ENCODE measurements at regions of chr16 and their contacts with region 1.

Region 1: DNA sequence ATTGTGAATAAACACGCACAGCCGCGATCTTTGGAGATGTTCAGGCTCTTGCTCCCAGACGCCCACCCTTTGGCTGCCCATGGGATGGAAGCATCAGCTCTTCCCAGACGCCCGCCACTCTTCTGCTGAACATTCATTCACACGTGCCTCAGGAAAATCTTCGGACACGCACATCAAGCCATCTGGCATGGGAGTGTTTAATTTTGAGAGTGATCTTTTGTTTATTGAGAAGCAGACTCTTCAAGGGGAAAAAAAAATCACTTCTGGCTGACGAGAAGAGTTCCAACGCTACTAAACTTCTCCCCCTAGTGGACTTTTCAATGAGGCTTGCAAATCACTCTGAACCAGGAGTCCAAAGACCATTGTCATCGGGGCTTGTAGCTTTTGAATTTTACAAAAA is 62.0 kb upstream of the NUDT7 start:
- DNase-seq: peak; percentile 33 to 36
- ATAC-seq: peak; percentile 81 to 83; a peak in 5 of 6 replicates
- H3K4me3 ChIP-seq: no peak overlapping the region
- H3K27ac ChIP-seq: no peak overlapping the region
- H3K4me1 ChIP-seq: no peaks in the 10 kb centered on the region
- CTCF ChIP-seq: peak; percentile 65
- EP300 ChIP-seq: no peak
- POLR2A ChIP-seq: no peak
- RAD21 ChIP-seq: peak; percentile 67 to 75

Region 2: GRCh38 chr16:77599793-77600415 is 60.4 kb before region 1 on chr16:
- CTCF ChIA-PET with region 1: interaction called, 16 read pairs
- POLR2A ChIA-PET with region 1: no interaction called
- DNase-seq: peak; percentile 54 to 56
- ATAC-seq: peak; percentile 66 to 84; a peak in 3 of 6 replicates
- H3K4me3 ChIP-seq: no peak overlapping the region
- H3K27ac ChIP-seq: no peak overlapping the region
- H3K4me1 ChIP-seq: no peaks in the 10 kb centered on the region
- CTCF ChIP-seq: peak; percentile 67
- EP300 ChIP-seq: no peak
- POLR2A ChIP-seq: no peak
- RAD21 ChIP-seq: peak; percentile 49 to 65; a peak in 4 of 5 replicates

Region 3: DNA sequence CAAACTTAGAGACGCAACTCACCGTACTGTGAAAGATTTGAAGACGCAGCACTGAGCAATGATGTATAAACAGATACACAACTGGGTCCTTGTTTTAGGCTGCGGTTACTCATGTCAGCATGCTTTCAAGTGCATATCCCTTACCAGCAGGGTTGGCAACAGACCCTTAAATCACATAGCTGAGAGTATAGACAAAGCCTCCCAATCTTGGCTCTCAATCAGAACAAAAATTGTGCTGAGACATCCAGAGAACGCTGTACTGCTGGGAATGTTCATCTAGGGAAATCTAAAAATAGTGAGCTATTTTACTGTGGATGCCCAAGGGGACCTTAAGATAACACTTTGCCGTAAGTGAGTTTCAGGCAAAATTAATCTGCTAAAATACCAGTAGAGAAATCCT is 22.4 kb before region 1 on chr16:
- CTCF ChIA-PET with region 1: interaction called, 19 read pairs
- POLR2A ChIA-PET with region 1: no interaction called
- DNase-seq: no peak
- ATAC-seq: no peak
- H3K4me3 ChIP-seq: no peak overlapping the region
- H3K27ac ChIP-seq: no peak overlapping the region
- H3K4me1 ChIP-seq: no peaks in the 10 kb centered on the region
- CTCF ChIP-seq: no peak
- EP300 ChIP-seq: no peak
- POLR2A ChIP-seq: no peak
- RAD21 ChIP-seq: no peak

Region 4: GRCh38 chr16:77675464-77676324 is 15.4 kb after region 1 on chr16:
- CTCF ChIA-PET with region 1: interaction called, 14 read pairs
- POLR2A ChIA-PET with region 1: no interaction called
- DNase-seq: peak; percentile 41 to 73
- ATAC-seq: peak; percentile 91 to 95
- H3K4me3 ChIP-seq: no peak overlapping the region
- H3K27ac ChIP-seq: no peak overlapping the region
- H3K4me1 ChIP-seq: no peaks in the 10 kb centered on the region
- CTCF ChIP-seq: peak; percentile 91
- EP300 ChIP-seq: no peak
- POLR2A ChIP-seq: no peak
- RAD21 ChIP-seq: peak; percentile 95 to 98